Activated CD8-positive, alpha-beta T cell treated with anti-CD3 and anti-CD28 coated beads for 36 hours (primary cell): ENCODE measurements at regions of chr16 and their contacts with region 1.

Region 1: DNA sequence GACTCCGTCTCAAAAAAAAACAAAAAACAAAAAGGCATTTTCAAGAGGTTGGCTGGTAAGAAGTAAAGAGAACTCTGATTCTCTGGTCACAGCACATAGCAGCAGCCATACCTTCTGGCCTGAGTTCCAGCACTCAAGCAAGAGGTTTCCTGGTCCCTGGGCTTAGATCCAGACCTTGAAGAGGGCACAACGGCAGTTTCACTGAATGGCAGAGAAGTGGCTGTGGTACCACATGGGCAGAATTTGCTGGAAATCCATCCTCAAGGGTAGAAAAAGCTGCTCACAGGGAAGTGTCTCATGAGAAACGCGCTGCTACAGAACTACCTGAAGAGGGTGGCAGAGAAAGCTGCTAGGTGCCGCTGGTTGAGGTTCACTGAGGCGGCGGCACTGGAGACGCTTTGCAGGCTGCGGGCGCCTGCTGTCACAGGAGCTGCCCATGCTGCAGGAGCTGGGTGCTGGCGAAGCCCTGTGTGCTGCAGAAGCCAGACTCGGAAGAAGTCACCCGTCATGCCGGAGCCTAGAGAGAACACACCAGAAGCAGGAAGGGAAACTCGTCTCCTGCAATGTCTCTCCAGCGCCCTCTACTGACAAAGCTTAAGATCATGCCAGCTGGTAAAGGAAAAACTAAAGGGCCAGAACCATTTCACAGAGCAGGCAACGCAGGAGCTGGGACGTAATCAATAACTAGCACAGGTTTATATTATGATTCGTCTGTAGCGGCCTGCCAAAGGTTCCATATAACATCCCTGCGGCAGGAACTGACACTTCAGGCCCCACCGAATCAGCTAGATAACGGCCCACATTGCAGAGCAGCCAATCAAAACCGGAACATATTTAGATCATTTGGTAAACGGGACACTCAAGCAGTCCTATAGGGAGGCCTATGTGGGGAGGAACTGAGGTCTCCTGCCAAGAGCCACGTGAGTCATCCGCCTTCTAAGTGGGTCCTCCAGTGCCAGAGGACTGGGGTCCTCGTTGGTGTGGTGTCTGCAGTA is 5.4 kb upstream of the ZNF213 start:
- DNase-seq: peak; percentile 79
- ATAC-seq: peak; percentile 77
- H3K4me3 Mint-ChIP-seq: peak overlapping the region; percentile 85
- H3K27ac Mint-ChIP-seq: peak overlapping the region; percentile 86
- H3K4me1 Mint-ChIP-seq: peaks cover 42% of the 10 kb centered on the region
- H3K27me3 Mint-ChIP-seq: no peaks in the 10 kb centered on the region
- CTCF ChIP-seq: peak; percentile 96

Region 2: GRCh38 chr16:3023669-3024478 is 105.6 kb before region 1 on chr16 and contains the starts of genes HCFC1R1 and THOC6:
- CTCF ChIA-PET with region 1: interaction called, 105 read pairs
- POLR2A ChIA-PET with region 1: interaction called, 4 read pairs
- intact Hi-C with region 1: no loop called
- DNase-seq: peak; percentile 99
- ATAC-seq: peak; percentile 70
- H3K4me3 Mint-ChIP-seq: peak within 1 kb of the TSS; percentile 77
- H3K27ac Mint-ChIP-seq: peak within 1 kb of the TSS; percentile 97
- H3K4me1 Mint-ChIP-seq: peaks cover 50% of the 10 kb centered on the region
- H3K27me3 Mint-ChIP-seq: peaks cover 7% of the 10 kb centered on the region
- CTCF ChIP-seq: no peak
- total RNA-seq, gene HCFC1R1: 24.2 to 24.8 TPM
- total RNA-seq, gene THOC6: 55.4 to 56.6 TPM

Region 3: DNA sequence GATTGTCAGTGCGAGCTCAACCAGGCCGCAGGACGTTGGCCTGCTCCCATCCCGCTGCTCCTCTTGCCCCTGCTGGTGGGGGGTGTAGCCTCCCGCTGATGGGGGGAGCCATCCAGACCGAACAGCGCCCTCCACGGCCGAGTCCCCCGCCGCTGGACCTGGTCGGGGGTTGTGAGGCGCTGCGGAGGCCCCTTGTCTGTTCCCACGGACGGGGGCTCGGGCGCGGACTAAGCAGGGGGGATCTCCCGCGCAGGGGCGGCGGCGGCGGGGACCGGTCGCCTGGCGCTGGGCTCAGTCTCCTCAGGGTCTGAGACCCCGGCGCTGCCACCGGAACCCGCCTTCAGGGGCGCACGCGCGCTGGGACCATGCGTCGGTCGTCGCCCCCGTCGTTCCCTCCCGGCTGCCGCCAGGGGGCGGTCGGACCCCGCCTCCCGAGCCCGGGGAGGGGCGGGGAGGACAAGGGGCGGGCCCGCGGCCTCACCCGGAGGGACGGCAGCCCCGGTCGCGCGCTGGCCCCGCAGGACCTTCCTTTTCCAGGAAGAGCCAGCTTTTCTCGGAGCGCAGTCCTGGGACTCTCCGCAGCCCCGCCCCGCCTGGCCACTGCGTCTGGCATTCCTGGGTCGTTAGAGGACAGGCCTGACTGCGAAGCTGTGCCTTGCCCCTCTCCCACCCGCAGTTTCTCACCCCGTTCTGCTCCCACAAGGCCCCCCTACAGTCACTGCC is 70.3 kb before region 1 on chr16:
- CTCF ChIA-PET with region 1: interaction called, 288 read pairs
- POLR2A ChIA-PET with region 1: interaction called, 22 read pairs
- intact Hi-C with region 1: loop called (anchors 2 kb)
- DNase-seq: peak; percentile 87
- ATAC-seq: peak; percentile 86
- H3K4me3 Mint-ChIP-seq: peak overlapping the region; percentile 82
- H3K27ac Mint-ChIP-seq: peak overlapping the region; percentile 93
- H3K4me1 Mint-ChIP-seq: peaks cover 57% of the 10 kb centered on the region
- H3K27me3 Mint-ChIP-seq: no peaks in the 10 kb centered on the region
- CTCF ChIP-seq: peak; percentile 98

Region 4: DNA sequence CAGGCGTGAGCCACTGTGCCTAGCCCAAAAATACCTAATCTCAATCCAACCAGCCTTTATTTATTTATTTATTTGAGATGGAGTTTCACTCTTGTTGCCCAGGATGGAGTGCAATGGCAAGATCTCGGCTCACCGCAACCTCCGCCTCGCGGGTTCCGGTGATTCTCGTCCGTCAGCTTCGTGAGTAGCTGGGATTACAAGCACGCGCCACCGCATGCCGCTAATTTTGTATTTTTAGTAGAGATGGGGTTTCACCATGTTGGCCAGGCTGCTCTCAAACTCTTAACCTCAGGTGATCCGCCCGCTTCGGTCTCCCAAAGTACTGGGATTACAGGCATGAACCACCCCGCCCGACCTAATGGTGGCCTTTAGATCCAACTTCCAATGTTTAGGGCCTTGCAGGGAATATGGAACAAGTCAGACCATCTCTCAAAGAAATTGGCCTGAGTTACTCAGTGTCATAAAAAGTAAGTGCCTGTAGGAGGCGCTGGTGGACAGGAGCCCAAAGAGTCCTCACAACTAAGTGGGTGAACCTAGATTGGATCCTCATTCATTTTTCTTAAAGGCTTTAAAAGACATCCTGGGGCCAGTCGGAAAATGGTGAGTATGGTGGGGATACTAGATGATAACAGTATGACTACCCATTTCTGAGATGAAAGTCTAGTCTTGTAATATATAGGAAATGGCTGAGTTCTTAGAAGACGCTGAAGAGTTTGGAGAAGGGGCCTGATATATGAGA is 35.0 kb before region 1 on chr16:
- CTCF ChIA-PET with region 1: interaction called, 376 read pairs
- POLR2A ChIA-PET with region 1: interaction called, 21 read pairs
- intact Hi-C with region 1: loop called (anchors 5 kb)
- DNase-seq: peak; percentile 78
- ATAC-seq: peak; percentile 53
- H3K4me3 Mint-ChIP-seq: no peak overlapping the region
- H3K27ac Mint-ChIP-seq: peak overlapping the region; percentile 75
- H3K4me1 Mint-ChIP-seq: peaks cover 31% of the 10 kb centered on the region
- H3K27me3 Mint-ChIP-seq: no peaks in the 10 kb centered on the region
- CTCF ChIP-seq: peak; percentile 79

Region 5: GRCh38 chr16:3150346-3151218 is 21.1 kb after region 1 on chr16:
- CTCF ChIA-PET with region 1: interaction called, 33 read pairs
- POLR2A ChIA-PET with region 1: interaction called, 25 read pairs
- intact Hi-C with region 1: no loop called
- DNase-seq: peak; percentile 98
- ATAC-seq: peak; percentile 84
- H3K4me3 Mint-ChIP-seq: peak overlapping the region; percentile 85
- H3K27ac Mint-ChIP-seq: peak overlapping the region; percentile 89
- H3K4me1 Mint-ChIP-seq: peaks cover 17% of the 10 kb centered on the region
- H3K27me3 Mint-ChIP-seq: peaks cover 4% of the 10 kb centered on the region
- CTCF ChIP-seq: no peak

Region 6: DNA sequence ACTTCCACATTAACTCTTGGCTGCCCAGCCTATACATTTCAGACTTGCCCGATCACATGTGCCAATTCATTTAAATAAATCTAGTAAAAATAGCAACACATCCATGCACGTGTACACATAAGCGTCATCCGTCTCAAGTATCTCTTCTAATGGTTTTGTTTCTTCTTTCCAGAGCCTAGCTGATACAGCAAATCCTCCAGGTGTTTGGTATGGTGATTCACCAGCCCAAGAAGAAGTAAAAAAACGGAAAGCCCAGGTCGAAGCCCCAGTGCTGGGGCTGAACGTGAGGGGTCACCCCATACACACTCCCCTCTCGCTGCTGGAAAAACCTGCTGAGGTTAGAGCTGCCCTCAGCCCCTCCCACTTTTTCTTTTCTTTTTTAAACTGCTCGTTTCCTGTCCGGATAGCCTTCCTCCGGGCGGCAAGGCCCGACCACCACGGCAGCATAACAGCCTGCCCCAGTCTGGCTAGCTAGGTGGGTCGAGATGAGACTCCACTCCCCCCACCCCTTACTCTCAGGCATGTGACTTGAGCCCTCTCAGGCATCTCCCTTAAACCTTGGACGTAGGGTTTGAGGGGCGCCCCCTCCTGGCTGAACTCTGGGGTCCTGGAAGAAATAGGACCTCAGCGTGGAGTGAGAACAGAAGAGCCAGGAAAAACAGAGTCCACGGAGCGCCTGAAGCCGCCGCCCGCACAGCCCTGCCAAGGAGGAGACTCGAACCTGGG is 44.6 kb after region 1 on chr16:
- CTCF ChIA-PET with region 1: interaction called, 23 read pairs
- POLR2A ChIA-PET with region 1: interaction called, 9 read pairs
- intact Hi-C with region 1: no loop called
- DNase-seq: peak; percentile 71
- ATAC-seq: peak; percentile 28
- H3K4me3 Mint-ChIP-seq: peak overlapping the region; percentile 70
- H3K27ac Mint-ChIP-seq: peak overlapping the region; percentile 43
- H3K4me1 Mint-ChIP-seq: peaks cover 34% of the 10 kb centered on the region
- H3K27me3 Mint-ChIP-seq: peaks cover 45% of the 10 kb centered on the region
- CTCF ChIP-seq: peak; percentile 68

Region 7: DNA sequence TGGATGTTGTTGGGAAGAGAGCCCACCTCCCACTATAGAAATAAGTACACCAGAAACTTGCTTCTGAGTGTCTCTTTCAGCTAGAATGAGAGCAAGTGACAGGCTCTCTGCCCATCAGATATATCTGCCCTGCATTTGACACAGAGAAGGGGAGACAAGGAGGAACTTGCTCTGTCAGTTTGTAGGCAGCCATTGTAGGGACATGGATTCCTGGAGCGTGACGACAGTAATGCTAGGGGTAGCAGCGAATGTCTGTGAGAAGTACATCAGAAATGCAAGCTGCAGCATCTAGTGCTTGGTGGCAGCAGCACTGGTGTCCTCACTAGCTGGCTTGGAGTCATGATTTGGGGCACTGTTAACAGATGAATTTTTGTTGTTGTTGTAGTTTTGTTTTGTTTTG is 82.6 kb after region 1 on chr16:
- CTCF ChIA-PET with region 1: no interaction called
- POLR2A ChIA-PET with region 1: no interaction called
- intact Hi-C with region 1: no loop called
- DNase-seq: no peak
- ATAC-seq: no peak
- H3K4me3 Mint-ChIP-seq: no peak overlapping the region
- H3K27ac Mint-ChIP-seq: no peak overlapping the region
- H3K4me1 Mint-ChIP-seq: peaks cover 31% of the 10 kb centered on the region
- H3K27me3 Mint-ChIP-seq: no peaks in the 10 kb centered on the region
- CTCF ChIP-seq: no peak

Region 8: DNA sequence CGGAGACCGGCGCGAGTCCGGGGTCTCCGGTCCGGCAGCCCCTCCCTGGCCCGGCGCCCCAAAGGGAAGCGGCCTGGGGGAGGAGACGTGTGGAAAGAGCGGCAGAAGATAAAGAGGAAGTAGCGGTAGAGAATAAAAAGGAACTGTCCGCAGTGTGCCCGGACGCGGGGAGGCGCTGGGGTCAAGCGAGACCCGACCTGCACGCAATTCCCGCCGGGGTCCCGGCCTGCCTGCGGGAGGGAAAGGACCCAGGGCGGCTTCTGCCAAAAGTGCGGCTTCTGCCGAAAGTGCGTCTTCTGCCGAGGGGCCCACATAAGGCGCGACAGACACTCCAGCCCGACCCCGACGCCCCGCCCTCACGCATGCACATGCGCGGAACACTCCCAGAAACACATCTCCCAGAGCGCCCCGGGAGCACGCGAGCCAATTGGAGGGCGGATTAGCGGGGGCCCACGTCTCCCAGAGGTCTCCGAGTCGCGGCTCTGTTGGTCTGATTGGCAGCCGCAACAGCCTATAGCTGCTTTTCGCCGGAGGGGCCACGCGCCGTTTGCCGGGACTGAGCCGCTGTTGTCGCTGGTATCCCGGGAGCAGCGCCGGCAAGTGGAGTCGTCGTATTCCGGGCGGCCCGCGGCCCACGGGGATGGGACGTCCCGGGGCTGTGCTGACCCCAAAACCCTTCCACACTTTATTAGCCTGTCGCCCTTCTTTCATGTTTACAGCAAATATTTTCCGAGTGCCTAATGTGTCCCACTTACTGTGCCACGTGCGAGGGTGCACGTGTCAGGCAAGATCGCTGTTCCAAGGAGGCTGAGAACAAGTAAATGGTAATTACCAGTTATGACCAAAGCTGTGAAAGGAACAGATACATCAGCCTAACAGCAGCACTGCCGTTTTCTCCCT is 135.0 kb after region 1 on chr16:
- CTCF ChIA-PET with region 1: no interaction called
- POLR2A ChIA-PET with region 1: no interaction called
- intact Hi-C with region 1: no loop called
- DNase-seq: peak; percentile 99
- ATAC-seq: peak; percentile 91
- H3K4me3 Mint-ChIP-seq: peak overlapping the region; percentile 76
- H3K27ac Mint-ChIP-seq: peak overlapping the region; percentile 92
- H3K4me1 Mint-ChIP-seq: peaks cover 42% of the 10 kb centered on the region
- H3K27me3 Mint-ChIP-seq: no peaks in the 10 kb centered on the region
- CTCF ChIP-seq: no peak